ENCODE measurements at regions of chr10 and their contacts with region 1.

Region 1: GRCh38 chr10:72740528-72740927 is 48.6 kb downstream of the MCU start:
- DNase-seq: no peak
- ATAC-seq: no peak

Region 2: GRCh38 chr10:70967596-70968587 is 1772.6 kb before region 1 on chr10:
- intact Hi-C with region 1: loop called (anchors 10 kb)
- DNase-seq: no peak
- ATAC-seq: no peak

Measured in sciatic nerve (tissue), 2 donors.